Activated B cell treated with CpG ODN at 0.5 μM for 24 hours (primary cell): ENCODE measurements at regions of chr2 and their contacts with region 1.

Region 1: DNA sequence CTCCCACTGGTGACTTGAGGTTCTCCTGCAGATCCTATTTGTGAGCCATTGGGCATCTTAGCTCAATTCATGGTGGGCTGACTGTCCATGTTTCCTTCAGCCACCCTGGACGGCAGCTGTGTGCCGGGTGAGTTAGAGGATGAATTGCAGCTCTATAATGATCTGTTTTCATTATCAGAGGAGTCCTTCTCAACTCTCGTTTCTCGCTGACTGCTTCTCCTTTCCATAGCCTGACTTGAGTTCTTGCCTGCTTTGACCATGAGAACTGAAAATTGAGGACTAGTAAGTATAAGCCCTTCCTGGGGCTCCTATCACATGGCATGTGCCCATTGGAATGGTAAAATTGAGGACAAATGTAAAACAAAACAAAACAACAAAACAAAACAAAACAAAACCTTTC is 121.8 kb downstream of the CDC42EP3 start:
- DNase-seq: no peak
- ATAC-seq: no peak
- H3K4me3 Mint-ChIP-seq: no peak overlapping the region
- H3K27ac Mint-ChIP-seq: no peak overlapping the region
- H3K4me1 Mint-ChIP-seq: peaks cover 41% of the 10 kb centered on the region
- H3K27me3 Mint-ChIP-seq: no peaks in the 10 kb centered on the region
- CTCF ChIP-seq: no peak

Region 2: DNA sequence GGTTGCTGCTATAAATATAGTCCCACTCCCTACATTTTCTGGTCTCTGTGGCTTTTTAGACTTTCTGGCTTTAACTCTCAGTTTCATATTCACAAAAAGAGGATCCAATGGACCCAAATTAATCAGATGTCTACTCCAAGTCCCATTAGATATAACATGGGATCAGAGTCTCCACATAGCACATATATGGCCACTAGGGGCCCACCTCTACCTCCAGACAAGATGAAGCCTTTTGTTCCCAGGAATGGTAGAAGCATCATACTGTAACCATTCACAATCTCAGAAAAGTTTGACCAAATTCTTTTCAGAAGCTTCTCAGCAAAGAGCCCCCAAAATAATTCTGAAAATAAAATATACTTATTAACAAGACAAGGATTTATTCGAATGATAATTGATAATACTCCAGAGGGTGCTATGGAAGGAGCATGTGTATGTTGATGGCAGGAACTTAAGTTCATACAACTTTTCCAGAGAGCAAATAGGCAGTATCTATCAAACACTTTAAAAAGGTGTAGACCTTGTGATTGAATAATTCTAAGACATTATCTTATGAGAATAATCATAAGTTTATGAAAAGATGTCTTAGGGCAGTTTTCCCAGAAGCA is 1576.4 kb before region 1 on chr2:
- CTCF ChIA-PET with region 1: no interaction called
- POLR2A ChIA-PET with region 1: no interaction called
- intact Hi-C with region 1: no loop called
- DNase-seq: no peak
- ATAC-seq: no peak
- H3K4me3 Mint-ChIP-seq: no peak overlapping the region
- H3K27ac Mint-ChIP-seq: no peak overlapping the region
- H3K4me1 Mint-ChIP-seq: no peaks in the 10 kb centered on the region
- H3K27me3 Mint-ChIP-seq: peaks cover 2% of the 10 kb centered on the region
- CTCF ChIP-seq: no peak

Region 3: DNA sequence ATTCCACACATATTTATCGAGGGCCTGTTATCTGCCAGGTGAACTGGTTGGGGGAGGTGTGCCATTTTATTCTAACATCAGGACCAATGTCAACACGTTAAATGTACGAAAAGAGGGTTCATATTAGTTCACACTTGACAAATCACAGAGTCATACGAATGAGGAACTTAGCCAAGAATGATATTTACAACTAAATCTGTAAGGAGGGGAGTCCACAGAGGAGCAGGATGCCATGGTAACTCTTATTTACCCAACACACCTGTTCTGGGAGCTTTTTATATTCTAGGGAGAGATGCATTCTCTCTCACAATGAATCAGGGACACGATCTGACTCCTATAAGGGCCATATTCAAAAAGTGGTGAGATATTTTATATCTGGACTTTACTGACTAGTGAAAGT is 22.2 kb before region 1 on chr2:
- CTCF ChIA-PET with region 1: no interaction called
- POLR2A ChIA-PET with region 1: interaction called, 10 read pairs
- intact Hi-C with region 1: no loop called
- DNase-seq: no peak
- ATAC-seq: peak; percentile 75
- H3K4me3 Mint-ChIP-seq: no peak overlapping the region
- H3K27ac Mint-ChIP-seq: no peak overlapping the region
- H3K4me1 Mint-ChIP-seq: peaks cover 11% of the 10 kb centered on the region
- H3K27me3 Mint-ChIP-seq: no peaks in the 10 kb centered on the region
- CTCF ChIP-seq: no peak

Region 4: GRCh38 chr2:37585982-37586621 is 36.5 kb after region 1 on chr2:
- CTCF ChIA-PET with region 1: no interaction called
- POLR2A ChIA-PET with region 1: no interaction called
- intact Hi-C with region 1: loop called (anchors 5 kb)
- DNase-seq: no peak
- ATAC-seq: peak; percentile 34
- H3K4me3 Mint-ChIP-seq: peak overlapping the region; percentile 25
- H3K27ac Mint-ChIP-seq: peak overlapping the region; percentile 22
- H3K4me1 Mint-ChIP-seq: peaks cover 56% of the 10 kb centered on the region
- H3K27me3 Mint-ChIP-seq: no peaks in the 10 kb centered on the region
- CTCF ChIP-seq: no peak